ENCODE measurements at regions of chr10 and their contacts with region 1.

Region 1: DNA sequence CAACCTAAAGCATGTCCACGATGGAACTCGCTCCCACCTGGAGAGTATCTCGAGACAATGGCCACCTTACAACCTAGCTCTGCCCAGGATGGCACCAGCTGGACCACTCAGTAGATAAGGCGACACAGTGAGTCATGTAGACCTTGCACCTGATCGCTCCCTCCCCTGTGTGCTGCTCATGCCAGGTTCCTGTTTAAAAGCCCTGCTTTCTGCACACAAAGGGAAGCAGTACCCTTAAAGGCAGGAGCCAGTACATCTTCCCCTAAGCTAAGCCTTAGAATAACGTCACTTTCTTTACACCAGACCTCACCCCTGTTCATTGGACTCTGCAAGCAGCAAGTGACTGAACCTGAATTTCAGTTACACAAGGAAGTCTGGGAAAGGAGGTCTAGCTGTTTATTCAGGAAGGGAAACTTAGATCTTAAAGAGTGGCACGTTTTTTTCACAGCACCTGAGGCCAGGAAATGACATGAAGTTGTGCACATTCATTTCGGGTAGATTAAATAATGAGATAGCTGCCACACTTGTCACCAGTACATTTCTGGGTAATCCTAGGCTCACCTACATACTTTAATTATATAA is 117.9 kb downstream of the MTPAP start:
- DNase-seq: peak; percentile 32
- H3K4me3 Mint-ChIP-seq: no peak overlapping the region
- H3K27ac Mint-ChIP-seq: peak overlapping the region; percentile 19
- H3K4me1 Mint-ChIP-seq: peaks cover 29% of the 10 kb centered on the region
- H3K27me3 Mint-ChIP-seq: peaks cover 7% of the 10 kb centered on the region

Region 2: DNA sequence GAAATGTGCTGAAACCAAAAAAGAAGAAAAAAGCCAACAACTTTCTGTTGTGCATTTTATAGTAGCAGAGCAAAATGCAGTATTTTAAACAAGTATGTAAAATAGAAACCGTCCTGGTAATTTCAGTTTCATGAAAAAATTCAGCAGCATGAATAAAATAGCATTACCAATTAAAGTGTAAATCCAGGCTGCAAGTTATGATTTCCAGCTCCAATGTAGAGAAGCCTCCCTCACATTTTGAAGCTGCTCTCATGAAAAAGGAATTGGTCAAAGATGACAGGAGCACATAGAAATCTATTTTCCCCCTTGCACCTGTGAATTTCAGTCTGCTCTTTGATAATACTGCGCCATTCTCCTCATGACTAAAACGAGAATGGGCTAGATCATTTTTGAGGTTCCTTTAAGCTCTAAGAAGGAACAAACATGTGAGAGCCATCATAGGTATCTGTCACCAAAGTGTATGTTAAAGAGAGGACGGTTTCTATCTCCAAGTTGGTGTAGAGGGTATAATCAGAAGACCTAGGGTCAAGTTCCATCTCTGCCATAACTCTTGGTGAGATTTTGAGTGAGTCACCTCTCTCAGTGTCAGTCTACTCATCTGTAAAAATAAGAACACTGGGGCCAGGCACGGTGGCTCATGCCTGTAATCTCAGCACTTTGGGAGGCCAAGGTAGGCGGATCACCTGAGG is 10.4 kb after region 1 on chr10:
- CTCF ChIA-PET with region 1: interaction called, 30 read pairs
- DNase-seq: no peak
- H3K4me3 Mint-ChIP-seq: no peak overlapping the region
- H3K27ac Mint-ChIP-seq: no peak overlapping the region
- H3K4me1 Mint-ChIP-seq: peaks cover 2% of the 10 kb centered on the region
- H3K27me3 Mint-ChIP-seq: peaks cover 14% of the 10 kb centered on the region